Panc1 (cell line): ENCODE measurements at regions of chr9 and their contacts with region 1.

Region 1: DNA sequence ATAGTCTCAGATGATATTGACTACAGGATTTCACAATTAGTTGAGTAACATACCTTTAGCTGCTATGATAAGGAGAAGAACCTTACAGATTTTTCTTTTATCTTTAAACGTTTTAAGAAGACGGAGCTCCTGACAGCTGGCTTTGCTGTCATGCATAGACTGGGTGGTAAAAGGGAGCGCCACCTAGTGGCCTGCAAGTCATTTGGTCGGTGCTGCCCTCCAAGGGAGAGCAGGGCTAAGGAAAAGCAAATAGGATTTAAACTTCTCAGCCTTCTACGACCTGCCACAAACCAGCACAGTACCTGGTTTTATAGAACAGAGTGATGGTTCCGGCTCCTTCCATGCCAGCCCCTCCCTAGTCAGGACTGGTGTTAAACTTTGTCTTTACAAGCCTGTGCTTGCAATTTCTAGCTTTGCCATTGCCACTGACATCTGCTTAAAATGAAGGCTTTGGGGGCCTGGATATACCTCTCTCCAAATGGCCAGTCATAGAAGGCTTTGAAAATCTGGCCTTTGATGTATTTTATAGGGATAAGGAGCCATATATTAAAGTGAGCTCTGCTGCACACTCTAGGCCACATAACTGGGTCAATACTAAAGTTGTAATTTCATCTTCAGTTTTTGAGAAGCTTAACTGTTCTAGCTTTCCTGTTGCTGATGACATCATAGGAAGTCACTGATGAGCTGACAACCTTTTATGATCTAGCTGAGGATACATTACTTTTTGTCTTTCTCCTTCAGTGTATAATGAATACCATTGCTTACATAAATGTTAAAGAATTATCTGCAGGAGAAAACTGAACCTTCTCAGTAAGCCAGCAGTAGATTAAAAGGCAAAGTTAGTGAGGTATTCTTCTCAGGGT is 31.1 kb upstream of the ADAMTSL1 start:
- DNase-seq: no peak
- ATAC-seq: peak; percentile 77
- H3K4me3 ChIP-seq: no peak overlapping the region
- H3K27ac ChIP-seq: no peak overlapping the region
- H3K4me1 ChIP-seq: no peaks in the 10 kb centered on the region
- H3K27me3 ChIP-seq: no peaks in the 10 kb centered on the region
- CTCF ChIP-seq: peak; percentile 76

Region 2: GRCh38 chr9:18255158-18255629 is 187.7 kb before region 1 on chr9:
- CTCF ChIA-PET with region 1: no interaction called
- POLR2A ChIA-PET with region 1: no interaction called
- in situ Hi-C with region 1: no loop called
- intact Hi-C with region 1: loop called (anchors 5 kb)
- DNase-seq: no peak
- ATAC-seq: no peak
- H3K4me3 ChIP-seq: no peak overlapping the region
- H3K27ac ChIP-seq: no peak overlapping the region
- H3K4me1 ChIP-seq: no peaks in the 10 kb centered on the region
- H3K27me3 ChIP-seq: no peaks in the 10 kb centered on the region
- CTCF ChIP-seq: peak; percentile 71

Region 3: DNA sequence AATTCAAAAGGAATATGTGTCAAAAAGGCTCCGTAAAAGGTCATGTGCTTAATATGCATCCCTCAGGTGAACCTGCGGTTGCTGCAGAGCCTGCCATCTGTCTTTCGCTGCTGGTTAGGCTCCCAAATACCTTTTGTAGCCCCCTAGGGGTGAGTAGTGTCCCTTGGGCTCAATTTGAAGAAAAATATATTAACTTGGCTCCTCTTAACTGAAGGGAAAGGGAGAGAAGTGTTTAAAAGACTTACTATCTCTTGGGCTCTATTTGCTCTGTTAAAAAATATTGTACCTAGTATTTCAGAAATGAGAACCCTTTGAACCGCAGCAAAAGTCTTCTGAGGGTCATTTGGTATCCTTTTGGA is 145.3 kb before region 1 on chr9:
- CTCF ChIA-PET with region 1: no interaction called
- POLR2A ChIA-PET with region 1: no interaction called
- in situ Hi-C with region 1: no loop called
- intact Hi-C with region 1: no loop called
- DNase-seq: no peak
- ATAC-seq: no peak
- H3K4me3 ChIP-seq: no peak overlapping the region
- H3K27ac ChIP-seq: no peak overlapping the region
- H3K4me1 ChIP-seq: no peaks in the 10 kb centered on the region
- H3K27me3 ChIP-seq: no peaks in the 10 kb centered on the region
- CTCF ChIP-seq: no peak

Region 4: DNA sequence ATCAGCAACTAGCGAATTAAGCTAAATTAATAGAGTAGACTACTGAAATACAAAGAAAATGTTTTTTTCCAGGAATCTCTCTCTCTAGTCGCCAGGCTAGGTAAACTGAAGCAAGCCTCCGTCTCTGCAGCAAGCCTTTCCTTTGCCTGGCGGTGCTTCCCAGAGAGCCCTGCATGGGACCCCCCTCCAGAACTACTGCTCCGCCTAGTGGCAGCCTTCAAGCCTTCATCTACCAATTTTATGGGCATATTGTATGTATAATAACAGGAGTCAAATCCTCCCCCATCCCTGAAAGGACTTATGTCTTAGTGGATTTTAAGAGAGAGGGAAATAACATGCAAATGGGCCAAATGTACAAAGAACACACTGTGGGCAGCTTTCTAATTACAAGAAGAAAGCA is 348.2 kb after region 1 on chr9:
- CTCF ChIA-PET with region 1: no interaction called
- POLR2A ChIA-PET with region 1: no interaction called
- in situ Hi-C with region 1: no loop called
- intact Hi-C with region 1: no loop called
- DNase-seq: no peak
- ATAC-seq: no peak
- H3K4me3 ChIP-seq: no peak overlapping the region
- H3K27ac ChIP-seq: no peak overlapping the region
- H3K4me1 ChIP-seq: no peaks in the 10 kb centered on the region
- H3K27me3 ChIP-seq: no peaks in the 10 kb centered on the region
- CTCF ChIP-seq: peak; percentile 43

Region 5: GRCh38 chr9:19048966-19049916 is 606.4 kb after region 1 on chr9 and contains the start of gene RRAGA:
- CTCF ChIA-PET with region 1: no interaction called
- POLR2A ChIA-PET with region 1: no interaction called
- in situ Hi-C with region 1: no loop called
- intact Hi-C with region 1: no loop called
- DNase-seq: peak; percentile 51
- ATAC-seq: peak; percentile 94
- H3K4me3 ChIP-seq: peak within 1 kb of the TSS; percentile 67 to 78
- H3K27ac ChIP-seq: peak within 1 kb of the TSS; percentile 82
- H3K4me1 ChIP-seq: no peaks in the 10 kb centered on the region
- H3K27me3 ChIP-seq: no peaks in the 10 kb centered on the region
- CTCF ChIP-seq: peak; percentile 67
- total RNA-seq, gene RRAGA: 23.5 TPM